ENCODE measurements at regions of chr2 and their contacts with region 1.

Region 1: DNA sequence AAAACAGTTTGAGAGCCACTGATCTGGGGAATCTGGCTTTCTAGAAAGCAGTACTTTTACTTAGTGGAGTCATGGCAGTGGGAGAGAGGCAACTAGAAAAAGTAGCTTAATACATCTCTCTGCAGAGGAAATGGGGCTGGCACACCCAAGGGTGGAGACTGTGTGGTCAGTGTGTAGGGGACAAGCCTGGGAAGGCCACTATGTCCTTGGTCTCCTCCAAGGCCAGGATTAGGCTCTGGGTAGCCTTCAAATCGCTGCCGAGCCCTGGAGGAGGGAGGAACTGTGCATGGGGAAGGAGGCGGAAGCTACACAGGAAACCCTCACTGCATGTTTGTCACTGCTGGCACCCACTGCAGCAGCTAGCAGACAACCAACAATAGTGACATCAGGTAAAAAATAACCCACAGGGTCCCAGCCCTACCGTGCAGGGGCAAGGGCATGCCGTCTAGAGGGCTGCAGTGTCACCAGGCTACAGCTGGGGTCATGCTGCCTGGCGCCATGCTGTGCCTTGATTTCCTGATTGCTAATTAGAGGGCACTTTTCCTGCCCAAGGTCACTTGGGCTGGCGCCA is 34.8 kb downstream of the LBH start:
- DNase-seq: peak; percentile 49 to 89 (median 71)
- ATAC-seq: peak; percentile 90
- H3K4me3 ChIP-seq: peak overlapping the region; percentile 31 to 40
- H3K4me3 Mint-ChIP-seq: peak overlapping the region; percentile 82
- H3K27ac ChIP-seq: peak overlapping the region; percentile 72 to 87
- H3K27ac Mint-ChIP-seq: peak overlapping the region; percentile 98
- H3K4me1 ChIP-seq: peaks cover 69% of the 10 kb centered on the region
- H3K4me1 Mint-ChIP-seq: peaks cover 85% of the 10 kb centered on the region
- H3K27me3 ChIP-seq: no peaks in the 10 kb centered on the region
- H3K27me3 Mint-ChIP-seq: no peaks in the 10 kb centered on the region
- CTCF ChIP-seq: no peak

Region 2: GRCh38 chr2:29841386-29842004 is 424.6 kb before region 1 on chr2:
- CTCF ChIA-PET with region 1: no interaction called
- POLR2A ChIA-PET with region 1: no interaction called
- intact Hi-C with region 1: no loop called
- DNase-seq: peak in 3 of 9 experiments; percentile 7 to 38 (median 32)
- ATAC-seq: no peak
- H3K4me3 ChIP-seq: no peak overlapping the region
- H3K4me3 Mint-ChIP-seq: no peak overlapping the region
- H3K27ac ChIP-seq: no peak overlapping the region
- H3K27ac Mint-ChIP-seq: no peak overlapping the region
- H3K4me1 ChIP-seq: no peaks in the 10 kb centered on the region
- H3K4me1 Mint-ChIP-seq: no peaks in the 10 kb centered on the region
- H3K27me3 ChIP-seq: no peaks in the 10 kb centered on the region
- H3K27me3 Mint-ChIP-seq: peaks cover 18% of the 10 kb centered on the region
- CTCF ChIP-seq: peak; percentile 70

Region 3: DNA sequence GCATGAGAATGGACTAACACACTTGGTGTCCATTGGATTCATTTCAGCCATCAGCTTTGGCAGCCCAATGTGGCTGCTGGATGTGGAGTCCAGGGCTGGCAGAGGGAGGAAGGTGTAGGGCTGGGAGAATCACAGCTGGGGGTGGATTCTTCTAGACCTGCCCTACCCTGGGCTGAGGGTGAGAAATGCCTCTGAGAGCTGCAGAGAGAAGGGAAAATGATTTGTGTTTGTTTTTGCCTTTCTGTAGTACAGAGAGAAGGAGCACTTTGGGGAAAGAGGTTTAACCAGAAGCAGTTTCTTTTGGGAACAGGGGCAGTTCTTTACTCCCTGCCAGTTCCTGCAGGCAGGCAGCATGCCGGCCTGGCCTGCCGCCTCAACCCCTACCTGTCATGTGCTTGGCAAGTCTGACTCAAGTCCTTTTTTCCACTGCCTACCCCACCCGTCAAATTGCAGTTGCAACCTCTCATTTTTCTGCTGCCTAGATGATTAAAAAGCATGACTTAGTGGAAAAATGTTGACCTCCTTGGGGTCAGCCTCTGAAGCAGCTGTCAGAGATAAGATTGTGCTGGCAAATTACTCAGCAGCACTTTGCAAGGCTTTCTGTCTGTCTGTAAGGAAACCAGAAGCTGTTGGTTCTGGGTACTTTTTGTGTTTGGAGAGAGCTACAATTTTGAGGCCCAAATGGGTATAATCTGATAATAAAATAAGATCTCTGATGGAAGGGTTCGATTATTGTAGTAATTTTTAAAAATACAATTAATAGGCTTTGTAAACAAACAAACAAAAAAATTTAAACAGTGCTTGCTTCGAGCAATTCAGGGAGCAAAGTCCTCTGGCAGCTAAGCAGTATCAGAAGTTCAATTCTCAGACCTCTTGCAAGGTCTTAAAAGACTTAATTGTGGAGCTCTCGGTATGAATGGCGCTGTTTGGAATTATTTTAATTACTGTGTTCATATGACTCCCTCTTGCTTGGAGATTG is 13.1 kb before region 1 on chr2:
- CTCF ChIA-PET with region 1: interaction called, 6 read pairs
- POLR2A ChIA-PET with region 1: interaction called, 15 read pairs
- intact Hi-C with region 1: loop called in 1 of 2 experiments (anchors 1 kb)
- DNase-seq: peak in 7 of 9 experiments; percentile 36 to 64 (median 55)
- ATAC-seq: peak; percentile 37
- H3K4me3 ChIP-seq: peak overlapping the region in 1 of 2 experiments; percentile 17
- H3K4me3 Mint-ChIP-seq: peak overlapping the region; percentile 46
- H3K27ac ChIP-seq: peak overlapping the region; percentile 28 to 68
- H3K27ac Mint-ChIP-seq: peak overlapping the region; percentile 98
- H3K4me1 ChIP-seq: peaks cover 97% of the 10 kb centered on the region
- H3K4me1 Mint-ChIP-seq: peaks cover 96% of the 10 kb centered on the region
- H3K27me3 ChIP-seq: no peaks in the 10 kb centered on the region
- H3K27me3 Mint-ChIP-seq: no peaks in the 10 kb centered on the region
- CTCF ChIP-seq: no peak

Region 4: GRCh38 chr2:30310955-30311354 is 44.8 kb after region 1 on chr2:
- CTCF ChIA-PET with region 1: interaction called, 6 read pairs
- POLR2A ChIA-PET with region 1: interaction called, 4 read pairs
- intact Hi-C with region 1: loop called (anchors 5 kb)
- DNase-seq: peak in 1 of 9 experiments; percentile 30
- ATAC-seq: peak; percentile 25
- H3K4me3 ChIP-seq: no peak overlapping the region
- H3K4me3 Mint-ChIP-seq: peak overlapping the region; percentile 9
- H3K27ac ChIP-seq: no peak overlapping the region
- H3K27ac Mint-ChIP-seq: peak overlapping the region; percentile 67
- H3K4me1 ChIP-seq: peaks cover 35% of the 10 kb centered on the region
- H3K4me1 Mint-ChIP-seq: peaks cover 47% of the 10 kb centered on the region
- H3K27me3 ChIP-seq: no peaks in the 10 kb centered on the region
- H3K27me3 Mint-ChIP-seq: no peaks in the 10 kb centered on the region
- CTCF ChIP-seq: no peak